SK-N-SH (cell line): ENCODE measurements at regions of chr16 and their contacts with region 1.

Region 1: GRCh38 chr16:24253192-24253591 is 2.9 kb upstream of the CACNG3 start:
- DNase-seq: peak; percentile 68
- H3K4me3 ChIP-seq: no peak overlapping the region; a peak in 1 of 4 replicates
- H3K27ac ChIP-seq: no peak overlapping the region
- H3K4me1 ChIP-seq: no peaks in the 10 kb centered on the region
- H3K27me3 ChIP-seq: no peaks in the 10 kb centered on the region
- CTCF ChIP-seq: peak; percentile 66
- EP300 ChIP-seq: no peak
- RAD21 ChIP-seq: peak; percentile 67

Region 2: DNA sequence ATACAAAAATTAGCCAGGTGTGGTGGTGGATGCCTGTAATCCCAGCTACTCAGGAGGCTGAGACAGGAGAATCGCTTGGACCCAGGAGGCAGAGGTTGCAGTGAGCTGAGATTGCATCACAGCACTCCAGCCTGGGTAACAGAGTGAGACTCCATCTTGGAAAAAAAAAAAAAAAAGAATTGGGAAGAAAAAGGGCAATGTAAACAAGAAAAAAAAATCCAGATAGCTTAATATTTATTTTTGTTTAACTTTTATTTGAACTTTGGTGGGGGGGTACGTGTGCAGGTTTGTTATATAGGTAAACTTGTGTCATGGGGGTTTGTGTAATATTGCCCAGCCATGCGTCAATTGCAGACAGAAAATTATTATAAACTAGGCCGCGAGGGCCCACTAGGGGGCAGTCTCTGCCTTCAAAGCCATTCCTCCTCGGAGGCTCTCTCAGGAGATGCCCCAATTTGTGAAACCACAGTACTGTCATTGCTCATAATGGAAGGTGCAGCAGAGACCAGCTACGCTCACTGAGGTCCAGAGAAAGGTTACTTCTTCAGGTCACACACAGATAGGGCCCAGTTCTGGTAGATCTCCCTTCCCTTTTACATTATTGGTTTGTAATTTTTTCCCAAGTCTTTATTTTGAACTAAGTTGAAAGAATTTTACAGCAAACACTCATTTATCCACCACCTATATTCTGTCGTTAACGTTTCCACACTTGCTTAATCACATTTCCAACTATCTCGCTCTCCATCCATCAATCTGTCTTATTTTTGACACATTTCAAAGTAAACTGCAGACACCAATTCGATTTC is 211.2 kb before region 1 on chr16:
- CTCF ChIA-PET with region 1: interaction called, 223 read pairs
- POLR2A ChIA-PET with region 1: no interaction called
- DNase-seq: peak; percentile 75
- H3K4me3 ChIP-seq: peak overlapping the region in 1 of 2 experiments; percentile 48; a peak in 1 of 4 replicates
- H3K27ac ChIP-seq: no peak overlapping the region
- H3K4me1 ChIP-seq: no peaks in the 10 kb centered on the region; a peak in 1 of 4 replicates
- H3K27me3 ChIP-seq: no peaks in the 10 kb centered on the region
- CTCF ChIP-seq: peak; percentile 85
- EP300 ChIP-seq: no peak
- RAD21 ChIP-seq: peak; percentile 86

Region 3: GRCh38 chr16:24070851-24071250 is 182.3 kb before region 1 on chr16:
- CTCF ChIA-PET with region 1: interaction called, 70 read pairs
- POLR2A ChIA-PET with region 1: no interaction called
- DNase-seq: peak; percentile 67
- H3K4me3 ChIP-seq: peak overlapping the region in 1 of 2 experiments; percentile 39; a peak in 1 of 4 replicates
- H3K27ac ChIP-seq: no peak overlapping the region
- H3K4me1 ChIP-seq: peaks cover 0 to 4% of the 10 kb centered on the region in 2 experiments; a peak in 2 of 4 replicates
- H3K27me3 ChIP-seq: no peaks in the 10 kb centered on the region
- CTCF ChIP-seq: peak; percentile 46
- EP300 ChIP-seq: no peak
- RAD21 ChIP-seq: peak; percentile 70

Region 4: GRCh38 chr16:24221219-24221618 is 32.0 kb before region 1 on chr16:
- CTCF ChIA-PET with region 1: interaction called, 13 read pairs
- POLR2A ChIA-PET with region 1: no interaction called
- DNase-seq: no peak
- H3K4me3 ChIP-seq: no peak overlapping the region
- H3K27ac ChIP-seq: no peak overlapping the region
- H3K4me1 ChIP-seq: no peaks in the 10 kb centered on the region
- H3K27me3 ChIP-seq: no peaks in the 10 kb centered on the region
- CTCF ChIP-seq: no peak
- EP300 ChIP-seq: no peak
- RAD21 ChIP-seq: no peak

Region 5: DNA sequence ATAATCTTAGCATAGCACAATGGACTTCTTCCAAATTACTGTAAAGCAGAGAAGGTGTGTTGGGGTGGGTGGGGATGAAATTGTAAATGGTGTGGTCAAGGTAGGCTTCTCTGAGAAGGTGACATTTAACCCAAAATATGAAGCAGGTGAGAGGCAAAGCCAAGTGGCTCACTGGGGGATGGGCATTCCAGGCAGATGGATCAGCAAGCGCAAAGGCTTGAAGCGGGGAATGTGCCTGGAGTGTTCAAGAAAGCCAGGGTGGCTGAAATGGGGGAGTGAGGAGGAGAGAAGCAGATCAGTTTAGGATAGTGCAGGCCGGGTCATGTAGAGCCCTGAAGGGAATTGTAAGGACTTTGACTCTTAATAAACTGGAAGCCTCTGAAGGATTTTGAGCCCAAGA is 17.5 kb after region 1 on chr16:
- CTCF ChIA-PET with region 1: interaction called, 17 read pairs
- POLR2A ChIA-PET with region 1: no interaction called
- DNase-seq: no peak
- H3K4me3 ChIP-seq: no peak overlapping the region
- H3K27ac ChIP-seq: no peak overlapping the region
- H3K4me1 ChIP-seq: no peaks in the 10 kb centered on the region
- H3K27me3 ChIP-seq: no peaks in the 10 kb centered on the region
- CTCF ChIP-seq: no peak
- EP300 ChIP-seq: no peak
- RAD21 ChIP-seq: no peak